ENCODE measurements at regions of chr17 and their contacts with region 1.

Region 1: GRCh38 chr17:50200457-50201275 is 765 bp downstream of the COL1A1 start:
- DNase-seq: peak; percentile 76 to 91
- H3K4me3 ChIP-seq: peak overlapping the region; percentile 62; the same call in 1 of the 2 replicates
- H3K27ac ChIP-seq: 0 out of 2 replicates have a peak overlapping the region, but pooled peaks have one; percentile 84
- H3K4me1 ChIP-seq: peaks cover 22% of the 10 kb centered on the region
- H3K27me3 ChIP-seq: peaks cover 48% of the 10 kb centered on the region
- CTCF ChIP-seq: peak; percentile 100

Region 2: GRCh38 chr17:50094753-50095619 is 105.7 kb before region 1 on chr17 and contains the start of gene PDK2:
- CTCF ChIA-PET with region 1: no interaction called
- POLR2A ChIA-PET with region 1: no interaction called
- intact Hi-C with region 1: loop called (anchors 1 kb)
- DNase-seq: peak; percentile 92 to 97
- H3K4me3 ChIP-seq: peak within 1 kb of the TSS; percentile 88
- H3K27ac ChIP-seq: peak within 1 kb of the TSS; percentile 12; the same call in 1 of the 2 replicates
- H3K4me1 ChIP-seq: peaks cover 18% of the 10 kb centered on the region
- H3K27me3 ChIP-seq: no peaks in the 10 kb centered on the region
- CTCF ChIP-seq: no peak
- total RNA-seq, gene PDK2: 38.6 and 58.7 TPM in 2 replicates

Region 3: DNA sequence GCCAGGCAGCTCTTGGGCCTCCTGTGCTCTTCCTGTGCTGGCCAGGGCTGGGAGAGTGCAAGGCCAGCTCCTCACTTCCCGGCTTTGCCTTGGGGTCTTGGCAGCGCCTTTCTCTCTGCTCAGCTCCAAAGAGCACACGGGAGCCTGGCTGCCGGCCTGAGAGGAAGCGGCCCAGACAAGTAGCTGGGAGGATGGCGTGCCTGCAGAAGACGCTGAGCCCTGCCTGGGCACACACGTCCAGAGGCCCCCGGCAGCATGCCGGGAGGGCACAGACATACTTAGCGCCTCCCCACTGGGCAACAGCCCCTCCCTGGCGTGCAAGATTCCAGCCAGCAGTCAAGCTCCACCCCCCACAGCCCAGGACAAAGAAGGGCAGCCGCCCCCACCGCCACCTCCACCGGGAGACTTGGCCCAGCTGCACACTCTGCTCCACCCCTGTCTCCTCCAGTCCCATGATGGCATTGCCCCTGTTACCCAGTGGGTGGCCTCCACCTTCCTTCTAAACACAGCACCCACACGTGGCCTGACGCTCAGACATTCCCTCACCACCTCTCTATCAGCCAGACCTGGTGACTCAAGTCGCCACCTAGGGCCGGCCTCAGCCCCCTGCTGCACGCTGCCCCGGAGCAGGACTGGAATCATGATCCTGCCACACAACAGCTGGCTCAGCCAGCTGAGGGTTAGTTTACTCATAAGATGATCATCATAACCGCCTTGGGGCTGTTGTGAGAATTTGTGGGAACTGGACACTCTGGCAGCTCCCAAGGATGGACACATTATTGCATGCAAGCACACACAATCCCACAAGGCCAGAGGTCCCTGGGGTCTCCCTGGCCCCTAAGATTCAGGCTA is 22.5 kb before region 1 on chr17:
- CTCF ChIA-PET with region 1: interaction called, 4 read pairs
- POLR2A ChIA-PET with region 1: no interaction called
- intact Hi-C with region 1: loop called (anchors 1 kb)
- DNase-seq: peak; percentile 92 to 93
- H3K4me3 ChIP-seq: peak overlapping the region; percentile 5; the same call in 1 of the 2 replicates
- H3K27ac ChIP-seq: peak overlapping the region; percentile 32
- H3K4me1 ChIP-seq: peaks cover 18% of the 10 kb centered on the region
- H3K27me3 ChIP-seq: no peaks in the 10 kb centered on the region
- CTCF ChIP-seq: peak; percentile 76

Region 4: GRCh38 chr17:50279181-50279526 is 78.5 kb after region 1 on chr17:
- CTCF ChIA-PET with region 1: interaction called, 23 read pairs
- POLR2A ChIA-PET with region 1: no interaction called
- intact Hi-C with region 1: no loop called
- DNase-seq: peak; percentile 72 to 76
- H3K4me3 ChIP-seq: no peak overlapping the region
- H3K27ac ChIP-seq: peak overlapping the region; percentile 11; the same call in 1 of the 2 replicates
- H3K4me1 ChIP-seq: peaks cover 58% of the 10 kb centered on the region
- H3K27me3 ChIP-seq: no peaks in the 10 kb centered on the region
- CTCF ChIP-seq: no peak

Region 5: DNA sequence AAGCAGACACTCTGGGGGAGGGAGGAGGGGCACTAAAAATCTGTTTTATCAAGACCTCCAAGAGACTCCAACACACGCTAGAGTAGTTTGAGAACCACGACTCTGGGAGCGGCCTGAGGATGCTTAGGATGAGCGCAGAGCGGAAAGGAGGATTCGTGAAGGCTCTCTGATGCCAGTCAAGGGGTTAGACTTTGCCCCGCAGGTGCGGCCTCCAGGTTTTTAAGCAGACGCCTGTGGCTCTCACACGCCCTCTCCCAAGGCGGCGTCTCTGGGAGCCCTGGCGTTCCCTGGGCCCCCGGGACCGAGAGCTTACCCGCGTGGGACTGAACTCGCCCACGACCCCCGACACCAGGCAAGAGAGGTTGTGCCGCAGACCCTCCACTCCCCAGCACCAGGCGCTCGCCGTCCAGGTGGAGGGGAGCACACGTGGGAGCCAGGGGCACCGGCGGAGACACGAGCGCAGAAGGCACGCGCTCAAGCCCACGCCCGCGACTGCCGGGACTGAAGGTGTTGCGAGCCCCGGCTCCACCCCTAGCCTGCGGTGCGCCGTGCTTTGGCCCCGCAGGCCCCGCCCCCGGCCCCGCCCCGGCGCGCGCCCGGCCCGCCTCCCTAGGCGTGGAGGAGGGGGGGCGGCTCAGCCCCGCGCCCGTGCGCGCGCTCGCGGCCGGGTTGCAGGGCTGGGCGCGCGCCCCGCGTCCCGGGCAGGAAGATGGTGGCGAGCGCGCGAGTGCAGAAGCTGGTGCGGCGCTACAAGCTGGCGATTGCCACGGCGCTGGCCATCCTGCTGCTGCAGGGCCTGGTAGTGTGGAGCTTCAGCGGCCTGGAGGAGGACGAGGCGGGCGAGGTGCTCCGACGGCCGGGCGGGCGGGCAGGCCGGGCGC is 145.0 kb after region 1 on chr17 and contains the start of gene XYLT2:
- CTCF ChIA-PET with region 1: no interaction called
- POLR2A ChIA-PET with region 1: no interaction called
- intact Hi-C with region 1: loop called (anchors 2 kb)
- DNase-seq: peak; percentile 38 to 86
- H3K4me3 ChIP-seq: peak within 1 kb of the TSS; percentile 61
- H3K27ac ChIP-seq: no peak within 1 kb of the TSS
- H3K4me1 ChIP-seq: 0 out of 2 replicates have a peak, but pooled peaks cover 8% of the 10 kb centered on the region
- H3K27me3 ChIP-seq: no peaks in the 10 kb centered on the region
- CTCF ChIP-seq: no peak
- total RNA-seq, gene XYLT2: 34.0 and 37.5 TPM in 2 replicates

Region 6: GRCh38 chr17:50493744-50494143 is 293.1 kb after region 1 on chr17:
- CTCF ChIA-PET with region 1: interaction called, 17 read pairs
- POLR2A ChIA-PET with region 1: no interaction called
- intact Hi-C with region 1: no loop called
- DNase-seq: no peak
- H3K4me3 ChIP-seq: no peak overlapping the region
- H3K27ac ChIP-seq: peak overlapping the region; percentile 7; the same call in 1 of the 2 replicates
- H3K4me1 ChIP-seq: peaks cover 27% of the 10 kb centered on the region
- H3K27me3 ChIP-seq: no peaks in the 10 kb centered on the region
- CTCF ChIP-seq: no peak

Region 7: GRCh38 chr17:50697663-50698274 is 497.1 kb after region 1 on chr17:
- CTCF ChIA-PET with region 1: no interaction called
- POLR2A ChIA-PET with region 1: interaction called, 34 read pairs
- intact Hi-C with region 1: loop called (anchors 10 kb)
- DNase-seq: no peak
- H3K4me3 ChIP-seq: no peak overlapping the region
- H3K27ac ChIP-seq: peak overlapping the region; percentile 51; the same call in 1 of the 2 replicates
- H3K4me1 ChIP-seq: peaks cover 84% of the 10 kb centered on the region
- H3K27me3 ChIP-seq: no peaks in the 10 kb centered on the region
- CTCF ChIP-seq: peak; percentile 48; the same call in 1 of the 2 replicates

Measured in PC-9 (cell line).